SK-N-SH (cell line): ENCODE measurements at regions of chr6 and their contacts with region 1.

Region 1: DNA sequence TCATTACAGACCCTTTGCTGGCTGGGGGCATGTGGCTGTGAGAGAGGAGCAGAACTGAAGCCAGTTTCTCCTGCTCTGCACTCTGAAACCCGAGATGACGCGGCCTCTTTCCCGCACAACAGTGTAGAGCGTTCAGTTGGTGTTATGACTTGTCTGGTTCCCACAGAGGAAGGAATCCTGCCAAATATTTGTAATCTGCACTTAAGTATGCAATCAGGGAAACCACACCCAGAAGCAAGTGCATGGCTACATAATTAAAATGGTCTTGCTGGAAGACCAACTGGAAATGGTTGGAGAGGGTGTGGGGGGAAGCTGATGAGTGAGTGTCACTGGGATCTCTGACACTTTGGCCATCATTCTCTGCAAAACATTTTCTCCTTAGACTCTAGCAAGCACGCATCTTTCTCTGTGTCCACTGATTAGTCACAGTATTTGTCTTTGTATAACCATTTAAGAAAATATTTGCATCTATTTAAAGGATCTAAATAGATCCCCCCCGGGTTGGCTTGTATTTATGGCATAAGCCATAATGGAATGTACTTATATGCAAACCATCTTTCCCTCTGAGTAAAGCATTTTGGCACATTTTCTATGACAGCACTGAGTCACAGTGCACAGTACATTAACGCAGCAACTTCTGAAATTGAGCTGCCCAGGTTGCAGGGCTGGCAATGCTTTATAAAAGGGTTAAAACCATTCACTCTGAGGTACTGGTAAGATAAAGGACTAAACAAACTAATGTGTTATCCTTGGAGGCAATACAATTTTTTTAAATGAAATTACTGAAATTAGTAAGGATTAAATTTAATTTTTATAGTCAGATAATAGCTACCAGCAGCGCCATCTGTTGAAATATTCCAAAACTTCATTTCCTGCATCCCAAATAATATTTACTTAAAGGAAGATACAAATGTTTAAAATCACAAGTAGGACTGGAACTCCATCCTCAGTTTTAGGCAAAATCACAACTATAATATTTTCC is 76.7 kb downstream of the FOXC1 start:
- DNase-seq: peak; percentile 58
- H3K4me3 ChIP-seq: no peak overlapping the region
- H3K27ac ChIP-seq: peak overlapping the region; percentile 11 to 82
- H3K4me1 ChIP-seq: peaks cover 11 to 17% of the 10 kb centered on the region in 2 experiments
- H3K27me3 ChIP-seq: no peaks in the 10 kb centered on the region
- CTCF ChIP-seq: peak; percentile 72
- EP300 ChIP-seq: peak in 1 of 2 experiments; percentile 65; a peak in 1 of 4 replicates
- RAD21 ChIP-seq: peak; percentile 44

Region 2: GRCh38 chr6:1609648-1610496 is 76.5 kb before region 1 on chr6 and contains the start of gene FOXC1:
- CTCF ChIA-PET with region 1: interaction called, 12 read pairs
- POLR2A ChIA-PET with region 1: interaction called, 4 read pairs
- DNase-seq: peak; percentile 97
- H3K4me3 ChIP-seq: peak within 1 kb of the TSS; percentile 70 to 79
- H3K27ac ChIP-seq: peak within 1 kb of the TSS; percentile 72 to 90
- H3K4me1 ChIP-seq: peaks cover 0 to 6% of the 10 kb centered on the region in 2 experiments; a peak in 1 of 4 replicates
- H3K27me3 ChIP-seq: no peaks in the 10 kb centered on the region
- CTCF ChIP-seq: no peak
- EP300 ChIP-seq: no peak
- RAD21 ChIP-seq: no peak
- polyA plus RNA-seq, gene FOXC1: 3.6 and 4.3 TPM in 2 replicates

Region 3: GRCh38 chr6:1641323-1641885 is 45.0 kb before region 1 on chr6:
- CTCF ChIA-PET with region 1: interaction called, 16 read pairs
- POLR2A ChIA-PET with region 1: no interaction called
- DNase-seq: no peak
- H3K4me3 ChIP-seq: no peak overlapping the region
- H3K27ac ChIP-seq: no peak overlapping the region
- H3K4me1 ChIP-seq: peaks cover 0 to 14% of the 10 kb centered on the region in 2 experiments; a peak in 1 of 4 replicates
- H3K27me3 ChIP-seq: no peaks in the 10 kb centered on the region
- CTCF ChIP-seq: no peak
- EP300 ChIP-seq: no peak
- RAD21 ChIP-seq: no peak

Region 4: DNA sequence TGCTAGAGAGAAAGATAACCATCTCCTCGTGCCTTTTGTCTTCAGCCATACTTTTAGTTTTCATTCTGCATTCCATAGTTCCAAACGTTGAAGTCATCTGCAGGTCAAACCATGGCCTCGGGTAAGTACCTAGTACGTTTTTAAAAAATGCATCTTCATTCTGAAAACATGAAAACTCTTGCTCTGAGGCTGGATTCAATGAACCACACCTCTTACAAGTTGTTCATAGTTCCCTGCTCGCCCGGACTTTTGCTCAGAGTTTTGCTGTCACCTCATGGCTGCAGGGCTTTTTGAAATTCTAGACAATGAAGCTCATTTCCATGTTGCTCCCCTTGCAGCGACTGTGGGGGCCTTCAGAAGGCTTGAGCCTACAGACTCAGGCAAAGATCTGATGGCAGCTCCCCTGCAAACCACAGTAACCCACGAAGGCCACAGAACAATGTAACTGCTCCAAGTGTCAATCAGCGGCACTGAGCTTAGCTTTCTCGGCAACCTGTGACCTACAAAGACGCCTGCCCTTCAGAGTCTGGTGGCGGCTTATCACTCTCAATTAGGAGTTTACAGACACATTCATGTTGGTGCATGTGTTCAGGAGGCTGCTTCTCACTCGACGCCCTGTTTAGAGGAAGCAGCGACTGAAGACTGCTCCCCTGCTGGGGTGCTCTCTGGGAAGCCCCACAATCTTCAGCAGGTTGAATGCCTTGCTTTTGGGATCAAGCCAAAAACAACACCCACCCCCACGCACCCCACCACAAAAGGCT is 15.5 kb before region 1 on chr6:
- CTCF ChIA-PET with region 1: interaction called, 10 read pairs
- POLR2A ChIA-PET with region 1: no interaction called
- DNase-seq: no peak
- H3K4me3 ChIP-seq: no peak overlapping the region
- H3K27ac ChIP-seq: no peak overlapping the region
- H3K4me1 ChIP-seq: peaks cover 11 to 20% of the 10 kb centered on the region in 2 experiments; a peak in 3 of 4 replicates
- H3K27me3 ChIP-seq: no peaks in the 10 kb centered on the region
- CTCF ChIP-seq: no peak
- EP300 ChIP-seq: no peak
- RAD21 ChIP-seq: no peak

Region 5: DNA sequence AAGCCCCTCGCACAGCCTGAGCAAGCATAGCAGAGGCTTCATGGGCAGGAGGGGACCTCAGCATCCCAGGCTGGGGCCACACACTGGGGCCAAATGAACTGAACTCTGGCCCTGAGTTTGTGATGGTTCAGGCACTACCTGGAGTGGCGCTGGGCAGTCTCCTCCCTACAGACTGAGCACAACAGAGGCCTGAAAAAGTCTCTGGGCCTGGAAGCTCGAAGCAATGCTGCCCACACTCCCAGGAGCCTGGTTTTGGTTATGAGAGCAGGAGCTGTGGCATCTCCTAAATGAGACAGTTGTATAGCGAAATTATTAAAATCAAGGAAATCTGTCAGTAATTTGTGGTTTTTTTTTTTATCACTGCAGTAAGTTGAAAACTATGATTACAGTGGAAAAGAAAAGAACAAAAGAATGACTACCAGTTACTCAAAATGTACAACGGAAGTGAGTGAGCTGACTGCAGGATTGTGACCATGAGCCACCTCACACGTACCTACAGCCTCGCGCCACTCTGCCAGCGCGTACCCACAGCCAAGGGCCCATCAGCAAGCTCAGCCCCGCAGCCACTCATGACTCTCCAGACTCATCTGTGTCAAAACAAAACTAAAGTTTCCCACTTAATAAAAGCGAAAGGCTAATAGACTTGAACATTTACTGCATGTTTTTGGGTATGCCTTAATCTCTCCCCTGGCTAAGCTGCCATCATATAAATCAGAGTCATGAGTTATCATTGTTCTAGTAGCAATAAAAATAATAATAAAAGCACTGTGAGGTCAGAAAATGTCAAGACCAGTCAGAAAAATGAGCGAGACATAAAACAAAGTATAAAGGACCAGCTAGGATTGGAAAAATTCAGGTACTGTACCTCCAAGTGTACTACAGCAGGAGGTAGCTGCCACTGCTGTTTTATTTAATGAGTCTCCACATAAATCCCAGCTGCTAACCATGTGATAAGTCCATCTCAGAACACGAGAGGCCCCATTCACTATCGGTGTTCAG is 100.3 kb after region 1 on chr6:
- CTCF ChIA-PET with region 1: no interaction called
- POLR2A ChIA-PET with region 1: no interaction called
- DNase-seq: peak; percentile 44
- H3K4me3 ChIP-seq: no peak overlapping the region
- H3K27ac ChIP-seq: peak overlapping the region in 1 of 2 experiments; percentile 34; a peak in 3 of 4 replicates
- H3K4me1 ChIP-seq: peaks cover 6 to 10% of the 10 kb centered on the region in 2 experiments; a peak in 2 of 4 replicates
- H3K27me3 ChIP-seq: no peaks in the 10 kb centered on the region
- CTCF ChIP-seq: no peak
- EP300 ChIP-seq: no peak
- RAD21 ChIP-seq: no peak